CD4-positive, alpha-beta T cell (primary cell): ENCODE measurements at regions of chr13 and their contacts with region 1.

Region 1: DNA sequence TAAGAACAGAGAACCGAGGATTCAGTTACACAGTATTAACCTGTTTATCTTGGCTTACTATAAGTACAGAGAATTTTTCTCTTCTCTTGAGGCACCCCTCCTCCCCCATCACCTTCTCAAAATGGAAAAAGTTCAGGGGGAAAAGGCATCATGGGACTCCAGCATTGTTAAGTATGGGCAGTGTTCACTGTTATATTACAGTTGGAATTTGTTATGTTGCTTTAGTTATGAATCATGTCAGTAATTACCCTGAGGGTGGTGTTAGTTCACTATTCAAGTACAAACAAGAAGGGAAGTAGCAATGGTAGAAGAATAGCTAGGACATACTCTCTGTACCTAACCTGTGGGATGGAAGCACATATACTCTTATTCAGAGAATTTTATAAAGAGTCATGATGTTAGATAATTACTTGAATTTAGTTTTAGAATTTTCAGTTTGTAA is 12.0 kb downstream of the LPAR6 start:
- DNase-seq: peak in 3 of 14 experiments; percentile 41 to 60 (median 55)
- ATAC-seq: peak; percentile 68
- H3K4me3 ChIP-seq: peak overlapping the region; percentile 16
- H3K4me3 Mint-ChIP-seq: peak overlapping the region; percentile 13
- H3K27ac ChIP-seq: peak overlapping the region in 1 of 2 donors; percentile 26
- H3K27ac Mint-ChIP-seq: peak overlapping the region; percentile 37
- H3K4me1 ChIP-seq: peaks cover 25% of the 10 kb centered on the region
- H3K4me1 Mint-ChIP-seq: peaks cover 60% of the 10 kb centered on the region
- H3K27me3 ChIP-seq: no peaks in the 10 kb centered on the region
- H3K27me3 Mint-ChIP-seq: no peaks in the 10 kb centered on the region
- CTCF ChIP-seq: peak; percentile 48

Region 2: DNA sequence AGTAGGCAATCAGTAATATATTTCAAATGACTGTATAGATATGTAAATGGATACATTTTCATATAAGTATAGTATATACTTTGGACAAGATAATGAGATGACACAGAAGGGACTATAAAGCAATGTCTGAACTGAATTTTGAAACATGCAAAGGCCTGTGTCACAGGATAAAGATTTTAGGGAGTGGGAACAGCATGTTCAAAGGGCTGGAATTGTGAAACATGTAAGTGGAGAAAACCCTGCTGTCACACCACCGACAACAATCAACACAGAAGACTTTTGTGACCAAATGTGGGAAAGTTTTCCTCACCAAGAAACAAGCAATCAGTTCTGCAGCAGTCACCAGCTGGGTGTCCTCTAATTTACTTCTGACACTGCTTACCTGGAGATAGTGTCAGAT is 30.9 kb before region 1 on chr13:
- CTCF ChIA-PET with region 1: no interaction called
- POLR2A ChIA-PET with region 1: no interaction called
- intact Hi-C with region 1: loop called in 1 of 2 experiments (anchors 5 kb)
- DNase-seq: no peak
- ATAC-seq: no peak
- H3K4me3 ChIP-seq: no peak overlapping the region
- H3K4me3 Mint-ChIP-seq: no peak overlapping the region
- H3K27ac ChIP-seq: no peak overlapping the region
- H3K27ac Mint-ChIP-seq: no peak overlapping the region
- H3K4me1 ChIP-seq: no peaks in the 10 kb centered on the region
- H3K4me1 Mint-ChIP-seq: no peaks in the 10 kb centered on the region
- H3K27me3 ChIP-seq: no peaks in the 10 kb centered on the region
- H3K27me3 Mint-ChIP-seq: no peaks in the 10 kb centered on the region
- CTCF ChIP-seq: no peak

Region 3: DNA sequence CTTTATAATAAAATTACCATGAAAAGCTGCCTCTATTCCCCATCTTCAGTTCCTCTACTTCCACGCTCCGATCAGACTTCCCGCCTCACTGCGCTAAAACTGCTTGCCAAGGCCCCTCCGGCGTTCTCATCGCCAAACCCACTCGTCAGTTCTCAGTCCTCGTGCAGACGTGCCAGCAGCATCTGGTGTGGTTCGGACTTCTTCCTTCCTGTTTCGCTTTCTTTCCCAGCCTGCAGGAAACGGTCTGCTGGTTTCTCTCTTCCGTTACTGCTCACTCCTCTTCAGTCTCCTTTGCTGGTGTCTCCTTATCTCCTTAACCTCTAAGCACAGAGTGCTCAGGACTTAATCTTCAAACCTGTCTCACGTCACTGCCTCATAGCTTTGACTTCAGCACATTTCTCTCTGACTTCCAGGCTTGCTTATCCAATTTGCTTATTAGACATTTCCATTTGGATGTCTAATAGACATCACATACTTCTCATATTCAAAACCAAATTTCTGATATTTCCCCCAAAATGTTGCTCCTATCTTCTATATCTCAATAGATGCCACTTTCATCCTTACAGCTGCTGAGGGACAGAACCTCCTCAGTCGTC is 91.7 kb after region 1 on chr13:
- CTCF ChIA-PET with region 1: interaction called, 3 read pairs
- POLR2A ChIA-PET with region 1: interaction called, 11 read pairs
- intact Hi-C with region 1: no loop called
- DNase-seq: peak; percentile 46 to 92 (median 62)
- ATAC-seq: peak; percentile 83
- H3K4me3 ChIP-seq: peak overlapping the region; percentile 58
- H3K4me3 Mint-ChIP-seq: no peak overlapping the region
- H3K27ac ChIP-seq: peak overlapping the region; percentile 57 to 79
- H3K27ac Mint-ChIP-seq: no peak overlapping the region
- H3K4me1 ChIP-seq: peaks cover 54% of the 10 kb centered on the region
- H3K4me1 Mint-ChIP-seq: peaks cover 25% of the 10 kb centered on the region
- H3K27me3 ChIP-seq: no peaks in the 10 kb centered on the region
- H3K27me3 Mint-ChIP-seq: no peaks in the 10 kb centered on the region
- CTCF ChIP-seq: no peak

Region 4: DNA sequence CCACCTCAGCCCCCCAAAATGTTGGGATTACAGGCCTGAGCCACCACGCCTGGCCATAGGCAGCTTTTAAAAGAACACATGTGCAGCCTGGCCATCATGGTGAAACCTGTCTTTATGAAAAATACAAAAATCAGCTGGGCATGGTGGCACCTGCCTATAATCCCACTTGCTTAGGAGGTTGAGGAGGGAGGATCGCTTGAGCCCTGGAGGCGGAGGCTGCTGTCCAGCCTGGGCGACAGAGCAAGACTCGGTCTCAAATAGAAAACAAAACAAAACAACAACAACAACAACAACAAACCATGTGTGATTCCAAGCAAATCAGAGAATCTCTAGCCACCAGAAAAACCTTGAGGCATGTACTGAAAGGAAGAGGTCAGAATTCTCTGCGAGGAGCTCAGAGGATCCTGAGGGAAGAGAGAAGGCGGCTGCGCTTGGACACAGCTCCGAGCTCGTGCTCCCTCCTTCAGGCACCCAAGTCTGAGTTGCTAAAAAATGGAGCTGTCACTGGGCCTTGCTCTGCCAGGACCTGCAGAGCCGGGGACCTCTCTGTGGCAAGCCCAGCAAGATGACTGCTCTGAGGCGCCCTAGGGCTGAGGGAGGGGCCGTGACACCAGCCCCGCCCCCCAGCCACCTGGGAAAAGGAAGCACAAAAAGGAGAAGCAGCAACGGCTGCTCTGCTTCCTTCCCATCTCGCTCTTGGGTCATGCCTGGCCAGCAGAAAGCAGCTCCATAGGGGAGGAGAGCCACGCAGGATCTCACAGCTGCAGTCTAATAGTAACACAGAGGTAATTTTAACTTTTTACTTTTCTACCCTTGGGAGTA is 1227.2 kb after region 1 on chr13 and contains the start of gene ARL11:
- CTCF ChIA-PET with region 1: no interaction called
- POLR2A ChIA-PET with region 1: no interaction called
- intact Hi-C with region 1: no loop called
- DNase-seq: peak; percentile 25 to 75 (median 54)
- ATAC-seq: peak; percentile 92
- H3K4me3 ChIP-seq: peak within 1 kb of the TSS; percentile 50
- H3K4me3 Mint-ChIP-seq: peak within 1 kb of the TSS; percentile 88
- H3K27ac ChIP-seq: no peak within 1 kb of the TSS
- H3K27ac Mint-ChIP-seq: peak within 1 kb of the TSS; percentile 51
- H3K4me1 ChIP-seq: peaks cover 12% of the 10 kb centered on the region
- H3K4me1 Mint-ChIP-seq: peaks cover 16% of the 10 kb centered on the region
- H3K27me3 ChIP-seq: no peaks in the 10 kb centered on the region
- H3K27me3 Mint-ChIP-seq: no peaks in the 10 kb centered on the region
- CTCF ChIP-seq: no peak
- total RNA-seq, gene ARL11: 0.11 to 0.14 TPM